Endothelial cell of umbilical vein (primary cell): ENCODE measurements at regions of chr18 and their contacts with region 1.

Region 1: GRCh38 chr18:6885992-6886796 is 156.7 kb downstream of the ARHGAP28 start:
- DNase-seq: peak; percentile 62
- H3K4me3 ChIP-seq: no peak overlapping the region
- H3K27ac ChIP-seq: no peak overlapping the region
- H3K4me1 ChIP-seq: peaks cover 2% of the 10 kb centered on the region
- H3K27me3 ChIP-seq: no peaks in the 10 kb centered on the region
- CTCF ChIP-seq: peak; percentile 52 to 55
- POLR2A ChIP-seq: no peak

Region 2: GRCh38 chr18:6219116-6219717 is 667.0 kb before region 1 on chr18:
- CTCF ChIA-PET with region 1: interaction called, 5 read pairs
- POLR2A ChIA-PET with region 1: no interaction called
- dilution Hi-C with region 1: no loop called
- intact Hi-C with region 1: loop called (anchors 1 kb)
- DNase-seq: peak; percentile 52
- H3K4me3 ChIP-seq: no peak overlapping the region
- H3K27ac ChIP-seq: no peak overlapping the region
- H3K4me1 ChIP-seq: no peaks in the 10 kb centered on the region
- H3K27me3 ChIP-seq: no peaks in the 10 kb centered on the region
- CTCF ChIP-seq: peak; percentile 80 to 88
- POLR2A ChIP-seq: no peak

Region 3: GRCh38 chr18:6537475-6537874 is 348.7 kb before region 1 on chr18:
- CTCF ChIA-PET with region 1: interaction called, 253 read pairs
- POLR2A ChIA-PET with region 1: no interaction called
- dilution Hi-C with region 1: loop called (anchors 25 kb)
- intact Hi-C with region 1: no loop called
- DNase-seq: no peak
- H3K4me3 ChIP-seq: no peak overlapping the region
- H3K27ac ChIP-seq: no peak overlapping the region
- H3K4me1 ChIP-seq: peaks cover 9% of the 10 kb centered on the region
- H3K27me3 ChIP-seq: no peaks in the 10 kb centered on the region
- CTCF ChIP-seq: no peak
- POLR2A ChIP-seq: no peak

Region 4: DNA sequence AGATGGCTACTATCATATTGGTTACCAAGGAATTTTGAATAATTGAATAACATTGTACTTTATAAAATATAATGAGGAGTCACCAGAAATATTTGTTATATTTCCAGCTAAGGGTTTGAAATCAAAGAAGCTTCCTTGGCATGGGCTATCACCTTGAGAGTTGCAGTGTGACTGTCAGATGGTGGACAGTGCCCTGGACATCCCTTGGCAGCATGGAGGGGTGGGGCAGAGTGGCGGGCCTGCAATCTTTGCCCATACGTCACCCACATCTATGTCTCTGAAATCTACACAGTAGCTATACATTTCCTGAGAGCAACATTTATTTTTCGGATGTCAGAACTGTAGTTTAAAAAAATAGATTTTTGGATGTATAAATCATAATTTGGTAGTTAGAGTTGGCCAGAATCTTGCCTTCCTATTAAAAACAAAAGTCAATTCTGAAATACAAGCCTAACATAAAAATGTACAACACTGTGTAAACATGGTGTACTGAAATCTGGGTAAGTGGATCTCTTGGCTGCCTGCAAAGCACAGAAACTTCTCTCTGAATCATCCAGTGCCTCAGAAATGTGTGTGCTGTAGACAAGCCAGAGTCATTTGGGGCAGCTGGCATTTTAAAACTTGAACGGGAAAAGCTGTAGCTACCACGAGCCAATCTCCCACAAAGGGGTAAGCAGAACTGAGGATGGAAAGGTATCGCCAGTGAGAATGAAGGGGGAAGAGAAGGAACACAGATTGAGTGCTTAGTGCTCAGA is 280.9 kb before region 1 on chr18:
- CTCF ChIA-PET with region 1: interaction called, 62 read pairs
- POLR2A ChIA-PET with region 1: no interaction called
- dilution Hi-C with region 1: no loop called
- intact Hi-C with region 1: no loop called
- DNase-seq: no peak
- H3K4me3 ChIP-seq: no peak overlapping the region
- H3K27ac ChIP-seq: no peak overlapping the region
- H3K4me1 ChIP-seq: no peaks in the 10 kb centered on the region
- H3K27me3 ChIP-seq: peaks cover 0 to 2% of the 10 kb centered on the region in 2 experiments
- CTCF ChIP-seq: no peak
- POLR2A ChIP-seq: no peak

Region 5: DNA sequence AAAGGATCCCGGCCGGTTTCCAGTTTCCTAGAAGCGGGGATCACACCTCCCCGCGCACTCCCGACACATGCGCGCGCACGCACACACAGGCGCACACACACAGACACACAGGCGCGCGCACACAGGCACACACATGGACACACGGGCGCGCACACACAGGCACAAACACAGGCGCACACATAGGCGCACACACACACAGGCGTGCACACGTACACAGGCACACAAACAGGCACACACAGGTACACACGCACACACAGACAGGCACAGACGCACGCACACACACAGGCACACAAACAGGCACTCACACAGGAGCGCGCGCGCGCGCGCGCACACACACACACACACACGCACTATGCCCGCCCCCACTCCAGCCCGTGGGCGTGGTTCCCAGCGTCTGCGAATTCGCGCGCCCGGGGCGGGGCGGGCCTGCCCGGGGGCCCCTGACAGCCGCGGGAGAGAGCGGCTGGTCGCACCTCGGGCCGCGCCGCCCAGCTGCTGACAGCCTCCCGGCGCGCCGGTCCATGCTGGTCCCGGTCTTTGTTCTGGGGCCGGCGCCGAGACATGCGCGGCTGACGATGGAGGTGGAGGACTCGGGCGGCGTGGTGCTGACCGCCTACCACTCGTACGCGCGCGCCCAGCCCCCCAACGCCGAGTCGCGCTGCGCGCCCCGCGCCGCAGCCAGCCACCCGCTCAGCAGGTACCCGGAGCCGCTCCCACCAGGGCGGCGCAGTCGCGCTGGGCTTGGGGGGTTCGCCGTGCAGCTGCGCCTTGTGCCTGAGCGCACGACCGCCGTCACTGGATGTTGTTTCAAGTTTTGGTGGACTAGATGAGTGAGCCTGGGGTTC is 156.7 kb before region 1 on chr18 and contains the start of gene ARHGAP28:
- CTCF ChIA-PET with region 1: interaction called, 15 read pairs
- POLR2A ChIA-PET with region 1: no interaction called
- dilution Hi-C with region 1: no loop called
- intact Hi-C with region 1: loop called (anchors 1 kb)
- DNase-seq: peak; percentile 96
- H3K4me3 ChIP-seq: peak within 1 kb of the TSS; percentile 44 to 84 (median 57)
- H3K27ac ChIP-seq: peak within 1 kb of the TSS; percentile 69
- H3K4me1 ChIP-seq: peaks cover 39% of the 10 kb centered on the region
- H3K27me3 ChIP-seq: peaks cover 0 to 3% of the 10 kb centered on the region in 2 experiments
- CTCF ChIP-seq: peak; percentile 32 to 53
- POLR2A ChIP-seq: peak; percentile 70
- total RNA-seq, gene ARHGAP28: 21.0 and 23.4 TPM in 2 replicates

Region 6: DNA sequence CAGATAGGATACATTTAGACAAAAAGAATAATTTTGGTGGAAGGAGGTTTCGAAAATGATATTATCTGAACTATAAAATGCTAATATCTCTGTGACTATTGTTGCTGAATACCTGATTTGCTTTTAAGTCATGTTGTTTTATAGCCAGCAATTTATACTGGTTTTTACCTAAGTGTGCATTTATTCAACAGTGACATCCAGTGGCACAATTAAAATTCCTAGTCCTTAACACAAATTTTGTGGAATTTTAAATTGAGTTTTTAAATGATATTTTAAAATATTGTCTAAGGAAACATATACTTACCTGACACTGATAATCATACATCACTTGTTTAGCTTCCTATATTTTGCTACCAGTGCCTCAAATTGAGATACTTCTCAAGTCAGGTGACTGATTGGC is 11.9 kb before region 1 on chr18:
- CTCF ChIA-PET with region 1: interaction called, 10 read pairs
- POLR2A ChIA-PET with region 1: no interaction called
- dilution Hi-C with region 1: no loop called
- intact Hi-C with region 1: no loop called
- DNase-seq: peak; percentile 25
- H3K4me3 ChIP-seq: no peak overlapping the region
- H3K27ac ChIP-seq: no peak overlapping the region
- H3K4me1 ChIP-seq: no peaks in the 10 kb centered on the region
- H3K27me3 ChIP-seq: no peaks in the 10 kb centered on the region
- CTCF ChIP-seq: no peak
- POLR2A ChIP-seq: no peak

Region 7: GRCh38 chr18:6960656-6961055 is 74.5 kb after region 1 on chr18:
- CTCF ChIA-PET with region 1: no interaction called
- POLR2A ChIA-PET with region 1: no interaction called
- dilution Hi-C with region 1: no loop called
- intact Hi-C with region 1: no loop called
- DNase-seq: no peak
- H3K4me3 ChIP-seq: no peak overlapping the region
- H3K27ac ChIP-seq: no peak overlapping the region
- H3K4me1 ChIP-seq: no peaks in the 10 kb centered on the region
- H3K27me3 ChIP-seq: no peaks in the 10 kb centered on the region
- CTCF ChIP-seq: no peak
- POLR2A ChIP-seq: no peak